Activated B cell treated with CpG ODN at 0.5 μM for 24 hours (primary cell): ENCODE measurements at regions of chr10 and their contacts with region 1.

Region 1: GRCh38 chr10:84537447-84537931 is 209.1 kb downstream of the CCSER2 start:
- DNase-seq: no peak
- ATAC-seq: peak; percentile 79
- H3K4me3 Mint-ChIP-seq: no peak overlapping the region
- H3K27ac Mint-ChIP-seq: no peak overlapping the region
- H3K4me1 Mint-ChIP-seq: peaks cover 8% of the 10 kb centered on the region
- H3K27me3 Mint-ChIP-seq: peaks cover 33% of the 10 kb centered on the region
- CTCF ChIP-seq: peak; percentile 41

Region 2: DNA sequence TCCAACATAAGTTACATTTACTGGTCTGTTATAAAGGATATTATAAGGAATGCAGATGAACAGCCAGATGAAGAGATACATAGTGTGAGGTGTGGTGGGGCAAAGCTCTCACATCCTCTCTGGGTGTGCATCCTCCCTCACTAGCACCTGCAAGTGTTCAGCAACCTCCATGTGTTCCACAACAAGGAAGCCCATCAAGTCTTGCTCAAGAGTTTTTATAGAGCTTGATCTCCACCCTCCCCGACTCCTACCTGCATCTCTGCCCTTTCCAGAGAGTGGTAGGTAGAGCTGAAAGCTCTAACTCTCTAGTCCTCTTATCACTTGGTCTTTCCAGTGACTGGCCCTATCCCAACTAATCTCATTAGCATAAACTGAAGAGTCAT is 410.7 kb before region 1 on chr10:
- CTCF ChIA-PET with region 1: no interaction called
- POLR2A ChIA-PET with region 1: no interaction called
- intact Hi-C with region 1: no loop called
- DNase-seq: no peak
- ATAC-seq: no peak
- H3K4me3 Mint-ChIP-seq: no peak overlapping the region
- H3K27ac Mint-ChIP-seq: no peak overlapping the region
- H3K4me1 Mint-ChIP-seq: no peaks in the 10 kb centered on the region
- H3K27me3 Mint-ChIP-seq: peaks cover 14% of the 10 kb centered on the region
- CTCF ChIP-seq: no peak

Region 3: DNA sequence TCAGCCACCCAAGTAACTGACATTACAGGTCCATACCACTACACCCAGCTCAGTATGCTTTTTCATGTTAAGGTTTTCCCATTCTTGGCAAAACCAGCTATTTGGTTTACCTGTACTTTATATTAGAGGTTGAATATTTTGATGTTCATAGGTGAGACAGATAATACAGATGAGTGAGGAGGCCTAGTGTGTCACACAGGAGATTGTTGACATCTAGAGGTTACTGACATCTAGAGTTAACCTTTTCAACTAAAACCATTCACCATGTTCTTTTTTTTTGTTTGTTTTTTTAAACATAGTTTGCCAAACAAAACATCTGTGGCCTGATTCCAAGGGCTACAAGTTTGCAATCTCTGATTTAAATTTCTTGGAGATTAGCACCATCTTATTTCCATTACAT is 390.1 kb before region 1 on chr10:
- CTCF ChIA-PET with region 1: interaction called, 3 read pairs
- POLR2A ChIA-PET with region 1: no interaction called
- intact Hi-C with region 1: loop called (anchors 5 kb)
- DNase-seq: no peak
- ATAC-seq: no peak
- H3K4me3 Mint-ChIP-seq: no peak overlapping the region
- H3K27ac Mint-ChIP-seq: no peak overlapping the region
- H3K4me1 Mint-ChIP-seq: peaks cover 5% of the 10 kb centered on the region
- H3K27me3 Mint-ChIP-seq: no peaks in the 10 kb centered on the region
- CTCF ChIP-seq: no peak

Region 4: GRCh38 chr10:84264611-84265141 is 272.8 kb before region 1 on chr10:
- CTCF ChIA-PET with region 1: interaction called, 207 read pairs
- POLR2A ChIA-PET with region 1: no interaction called
- intact Hi-C with region 1: loop called (anchors 1 kb)
- DNase-seq: peak; percentile 47
- ATAC-seq: peak; percentile 88
- H3K4me3 Mint-ChIP-seq: no peak overlapping the region
- H3K27ac Mint-ChIP-seq: no peak overlapping the region
- H3K4me1 Mint-ChIP-seq: no peaks in the 10 kb centered on the region
- H3K27me3 Mint-ChIP-seq: peaks cover 43% of the 10 kb centered on the region
- CTCF ChIP-seq: peak; percentile 55

Region 5: DNA sequence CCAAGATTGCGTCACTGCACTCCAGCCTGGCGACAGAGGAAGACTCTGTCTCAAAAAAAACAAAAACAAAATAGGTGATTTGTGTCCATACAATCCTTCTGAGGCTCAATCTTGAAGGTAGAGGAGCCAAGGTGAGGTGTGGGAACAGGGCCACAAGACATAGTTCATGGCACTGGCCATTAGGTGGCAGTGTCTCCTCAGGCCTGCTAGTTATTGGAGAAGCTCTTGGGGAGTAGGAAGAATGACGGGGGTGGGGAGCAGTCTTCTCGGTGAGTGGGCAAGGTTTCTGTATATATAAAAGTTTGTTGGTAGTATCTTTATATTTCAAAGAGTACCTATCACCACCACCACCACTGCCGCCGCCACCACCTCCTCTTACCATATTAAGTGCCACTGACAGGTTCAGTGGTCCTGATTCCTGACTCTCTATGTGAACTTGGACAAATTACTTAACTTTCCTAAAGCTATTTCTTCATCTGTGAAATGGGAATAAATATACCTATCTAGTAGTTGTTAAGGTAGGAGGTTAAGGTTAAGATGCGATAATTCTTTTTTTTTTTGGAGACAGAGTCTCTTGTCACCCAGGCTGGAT is 185.1 kb before region 1 on chr10:
- CTCF ChIA-PET with region 1: interaction called, 9 read pairs
- POLR2A ChIA-PET with region 1: no interaction called
- intact Hi-C with region 1: loop called (anchors 1 kb)
- DNase-seq: no peak
- ATAC-seq: peak; percentile 70
- H3K4me3 Mint-ChIP-seq: no peak overlapping the region
- H3K27ac Mint-ChIP-seq: no peak overlapping the region
- H3K4me1 Mint-ChIP-seq: peaks cover 9% of the 10 kb centered on the region
- H3K27me3 Mint-ChIP-seq: no peaks in the 10 kb centered on the region
- CTCF ChIP-seq: no peak

Region 6: DNA sequence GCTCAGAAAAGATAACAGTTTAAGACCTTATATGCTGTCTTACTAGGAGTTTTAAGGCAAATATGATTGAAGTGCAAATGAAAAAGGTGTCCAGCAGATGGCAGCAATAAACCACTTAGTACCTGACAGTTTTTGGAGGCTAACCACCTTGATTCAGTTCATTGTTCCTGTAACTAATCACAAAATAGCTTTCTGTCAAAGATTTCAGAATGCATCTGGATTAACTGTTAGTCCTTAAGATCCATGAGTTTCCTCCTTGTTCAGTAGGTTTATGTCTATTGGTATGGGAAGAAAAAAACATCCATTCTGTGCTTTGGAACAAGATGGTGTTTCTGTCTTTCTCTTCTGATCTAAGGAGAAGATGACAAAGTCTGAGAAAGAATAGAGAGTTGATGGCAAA is 162.5 kb before region 1 on chr10:
- CTCF ChIA-PET with region 1: interaction called, 11 read pairs
- POLR2A ChIA-PET with region 1: no interaction called
- intact Hi-C with region 1: loop called (anchors 1 kb)
- DNase-seq: no peak
- ATAC-seq: no peak
- H3K4me3 Mint-ChIP-seq: no peak overlapping the region
- H3K27ac Mint-ChIP-seq: no peak overlapping the region
- H3K4me1 Mint-ChIP-seq: peaks cover 5% of the 10 kb centered on the region
- H3K27me3 Mint-ChIP-seq: no peaks in the 10 kb centered on the region
- CTCF ChIP-seq: peak; percentile 91

Region 7: GRCh38 chr10:84429926-84430520 is 107.5 kb before region 1 on chr10:
- CTCF ChIA-PET with region 1: interaction called, 19 read pairs
- POLR2A ChIA-PET with region 1: no interaction called
- intact Hi-C with region 1: loop called (anchors 1 kb)
- DNase-seq: no peak
- ATAC-seq: peak; percentile 75
- H3K4me3 Mint-ChIP-seq: no peak overlapping the region
- H3K27ac Mint-ChIP-seq: no peak overlapping the region
- H3K4me1 Mint-ChIP-seq: peaks cover 8% of the 10 kb centered on the region
- H3K27me3 Mint-ChIP-seq: no peaks in the 10 kb centered on the region
- CTCF ChIP-seq: peak; percentile 34

Region 8: DNA sequence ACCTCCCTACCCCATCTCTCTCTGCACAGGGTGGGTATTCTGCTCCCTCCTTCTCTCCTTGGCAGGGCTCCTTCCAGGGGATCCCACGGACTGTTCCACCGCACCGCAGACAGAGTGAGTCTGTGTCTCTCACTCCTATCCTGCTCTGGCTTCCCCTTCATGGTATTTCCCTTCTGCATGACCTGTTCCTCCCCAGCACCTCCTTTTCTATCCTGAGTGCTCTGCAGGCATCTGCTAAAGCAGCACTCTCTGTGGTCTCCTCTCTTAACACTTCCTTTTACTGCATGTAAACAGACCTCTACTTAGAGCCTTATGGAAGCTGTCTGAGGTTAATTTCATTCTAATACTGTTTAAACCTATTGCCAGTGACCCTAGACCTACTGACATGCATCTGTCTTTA is 37.6 kb before region 1 on chr10:
- CTCF ChIA-PET with region 1: no interaction called
- POLR2A ChIA-PET with region 1: no interaction called
- intact Hi-C with region 1: no loop called
- DNase-seq: no peak
- ATAC-seq: no peak
- H3K4me3 Mint-ChIP-seq: no peak overlapping the region
- H3K27ac Mint-ChIP-seq: no peak overlapping the region
- H3K4me1 Mint-ChIP-seq: peaks cover 3% of the 10 kb centered on the region
- H3K27me3 Mint-ChIP-seq: no peaks in the 10 kb centered on the region
- CTCF ChIP-seq: no peak